CD4-positive, alpha-beta T cell (primary cell): ENCODE measurements at regions of chr13 and their contacts with region 1.

Region 1: GRCh38 chr13:48775804-48776203 is 122.1 kb downstream of the CYSLTR2 start:
- DNase-seq: no peak
- ATAC-seq: no peak
- H3K4me3 ChIP-seq: no peak overlapping the region
- H3K4me3 Mint-ChIP-seq: no peak overlapping the region
- H3K27ac ChIP-seq: no peak overlapping the region
- H3K27ac Mint-ChIP-seq: no peak overlapping the region
- H3K4me1 ChIP-seq: no peaks in the 10 kb centered on the region
- H3K4me1 Mint-ChIP-seq: no peaks in the 10 kb centered on the region
- H3K27me3 ChIP-seq: no peaks in the 10 kb centered on the region
- H3K27me3 Mint-ChIP-seq: peaks cover 14% of the 10 kb centered on the region
- CTCF ChIP-seq: no peak

Region 2: GRCh38 chr13:46831588-46832194 is 1944.1 kb before region 1 on chr13:
- CTCF ChIA-PET with region 1: no interaction called
- POLR2A ChIA-PET with region 1: no interaction called
- intact Hi-C with region 1: loop called in 1 of 2 experiments (anchors 10 kb)
- DNase-seq: peak in 8 of 14 experiments; percentile 3 to 57 (median 18)
- ATAC-seq: no peak
- H3K4me3 ChIP-seq: no peak overlapping the region
- H3K4me3 Mint-ChIP-seq: no peak overlapping the region
- H3K27ac ChIP-seq: no peak overlapping the region
- H3K27ac Mint-ChIP-seq: no peak overlapping the region
- H3K4me1 ChIP-seq: no peaks in the 10 kb centered on the region
- H3K4me1 Mint-ChIP-seq: no peaks in the 10 kb centered on the region
- H3K27me3 ChIP-seq: peaks cover 0 to 6% of the 10 kb centered on the region in 2 experiments
- H3K27me3 Mint-ChIP-seq: peaks cover 7% of the 10 kb centered on the region
- CTCF ChIP-seq: peak; percentile 69

Region 3: GRCh38 chr13:48126944-48127830 is 648.6 kb before region 1 on chr13:
- CTCF ChIA-PET with region 1: no interaction called
- POLR2A ChIA-PET with region 1: no interaction called
- intact Hi-C with region 1: loop called in 1 of 2 experiments (anchors 10 kb)
- DNase-seq: peak; percentile 6 to 84 (median 32)
- ATAC-seq: peak; percentile 93
- H3K4me3 ChIP-seq: no peak overlapping the region
- H3K4me3 Mint-ChIP-seq: peak overlapping the region; percentile 23
- H3K27ac ChIP-seq: peak overlapping the region; percentile 61 to 73
- H3K27ac Mint-ChIP-seq: peak overlapping the region; percentile 91
- H3K4me1 ChIP-seq: peaks cover 11% of the 10 kb centered on the region
- H3K4me1 Mint-ChIP-seq: peaks cover 33% of the 10 kb centered on the region
- H3K27me3 ChIP-seq: no peaks in the 10 kb centered on the region
- H3K27me3 Mint-ChIP-seq: no peaks in the 10 kb centered on the region
- CTCF ChIP-seq: peak; percentile 81